Activated B cell treated with CpG ODN at 0.5 μM for 24 hours (primary cell): ENCODE measurements at regions of chr7 and their contacts with region 1.

Region 1: DNA sequence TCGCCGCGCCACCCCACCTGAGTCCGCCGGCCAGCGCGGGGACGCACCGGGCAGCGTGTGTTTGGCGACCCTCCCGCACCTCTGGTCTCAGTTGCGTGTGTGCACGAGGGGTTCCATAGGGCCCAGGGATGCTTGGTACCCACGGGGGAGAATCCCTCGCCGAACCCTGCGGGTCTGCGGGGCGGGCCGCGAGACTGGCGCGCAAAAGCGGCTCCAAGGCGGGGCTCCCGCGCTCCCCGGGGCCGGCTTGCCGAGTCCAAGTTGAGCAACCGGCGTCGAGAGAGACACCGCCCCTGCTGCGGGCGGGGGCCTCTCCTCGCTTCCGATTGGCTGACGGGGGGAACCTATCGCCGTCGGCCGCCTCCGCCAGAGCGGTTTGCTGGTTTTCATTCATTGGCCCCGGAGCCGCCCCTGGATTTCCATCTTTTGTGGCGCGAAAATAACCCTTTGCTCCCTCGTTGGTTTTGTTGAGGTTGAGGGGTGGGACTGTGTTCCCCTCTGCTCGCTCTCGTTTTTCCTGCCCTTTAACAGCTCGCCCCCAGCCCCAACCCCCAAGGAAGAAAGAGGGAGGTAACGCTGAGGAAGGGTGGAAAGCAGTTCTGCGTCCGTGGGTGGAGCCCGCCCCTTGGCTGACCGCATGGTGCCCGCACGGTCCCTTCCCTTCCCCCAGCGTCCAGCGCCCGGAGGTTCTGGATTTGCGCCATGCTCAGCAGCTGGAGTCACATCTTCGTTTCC is 4.0 kb upstream of the IGF2BP3 start:
- DNase-seq: peak; percentile 62
- ATAC-seq: peak; percentile 67
- H3K4me3 Mint-ChIP-seq: peak overlapping the region; percentile 77
- H3K27ac Mint-ChIP-seq: peak overlapping the region; percentile 41
- H3K4me1 Mint-ChIP-seq: peaks cover 30% of the 10 kb centered on the region
- H3K27me3 Mint-ChIP-seq: peaks cover 49% of the 10 kb centered on the region
- CTCF ChIP-seq: no peak

Region 2: GRCh38 chr7:23373151-23374004 is 100.9 kb before region 1 on chr7:
- CTCF ChIA-PET with region 1: no interaction called
- POLR2A ChIA-PET with region 1: no interaction called
- intact Hi-C with region 1: loop called (anchors 1 kb)
- DNase-seq: peak; percentile 28
- ATAC-seq: peak; percentile 69
- H3K4me3 Mint-ChIP-seq: peak overlapping the region; percentile 68
- H3K27ac Mint-ChIP-seq: peak overlapping the region; percentile 94
- H3K4me1 Mint-ChIP-seq: peaks cover 70% of the 10 kb centered on the region
- H3K27me3 Mint-ChIP-seq: no peaks in the 10 kb centered on the region
- CTCF ChIP-seq: no peak

Region 3: DNA sequence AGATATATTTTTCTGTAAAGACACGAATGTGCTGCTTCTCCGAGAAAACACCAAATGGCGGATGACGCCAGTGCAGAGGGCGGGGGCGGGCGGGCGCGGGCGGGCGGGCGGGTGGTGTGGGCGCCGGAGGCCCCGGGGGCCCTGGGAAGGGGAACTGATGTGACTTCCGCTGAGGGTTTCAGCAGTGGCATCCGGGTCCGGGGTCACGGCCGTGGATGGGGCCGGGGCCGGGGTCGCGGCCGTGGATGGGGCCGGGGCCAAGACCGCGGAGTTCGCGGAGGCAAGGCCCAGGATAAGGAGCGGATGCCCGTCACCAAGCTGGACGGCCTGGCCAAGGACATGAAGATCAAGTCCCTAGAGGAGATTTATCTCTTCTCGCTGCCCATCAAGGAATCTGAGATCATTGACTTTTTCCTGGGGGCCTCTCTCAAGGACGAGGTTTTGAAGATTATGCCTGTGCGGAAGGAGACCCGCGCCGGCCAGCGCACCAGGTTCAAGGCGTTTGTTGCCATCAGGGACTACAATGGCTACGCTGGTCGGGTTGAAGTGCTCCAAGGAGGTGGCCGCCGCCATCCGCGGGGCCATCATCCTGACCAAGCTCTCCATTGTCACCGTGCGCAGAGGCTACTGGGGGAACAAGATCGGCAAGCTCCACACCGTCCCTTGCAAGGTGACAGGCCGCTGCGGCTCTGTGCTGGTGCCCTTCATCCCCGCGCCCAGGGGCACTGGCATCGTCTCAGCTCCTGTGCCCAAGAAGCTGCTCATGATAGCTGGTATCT is 16.3 kb after region 1 on chr7:
- CTCF ChIA-PET with region 1: no interaction called
- POLR2A ChIA-PET with region 1: interaction called, 5 read pairs
- intact Hi-C with region 1: loop called (anchors 2 kb)
- DNase-seq: peak; percentile 40
- ATAC-seq: peak; percentile 96
- H3K4me3 Mint-ChIP-seq: peak overlapping the region; percentile 87
- H3K27ac Mint-ChIP-seq: peak overlapping the region; percentile 80
- H3K4me1 Mint-ChIP-seq: peaks cover 5% of the 10 kb centered on the region
- H3K27me3 Mint-ChIP-seq: no peaks in the 10 kb centered on the region
- CTCF ChIP-seq: no peak